CD4-positive, alpha-beta T cell (primary cell): ENCODE measurements at regions of chr12 and their contacts with region 1.

Region 1: GRCh38 chr12:46237371-46238045 is 31.3 kb downstream of the SLC38A1 start:
- DNase-seq: peak in 2 of 14 experiments; percentile 27 to 40
- ATAC-seq: no peak
- H3K4me3 ChIP-seq: no peak overlapping the region
- H3K4me3 Mint-ChIP-seq: peak overlapping the region; percentile 4
- H3K27ac ChIP-seq: peak overlapping the region in 1 of 2 donors; percentile 4
- H3K27ac Mint-ChIP-seq: peak overlapping the region; percentile 56
- H3K4me1 ChIP-seq: peaks cover 28% of the 10 kb centered on the region
- H3K4me1 Mint-ChIP-seq: peaks cover 87% of the 10 kb centered on the region
- H3K27me3 ChIP-seq: no peaks in the 10 kb centered on the region
- H3K27me3 Mint-ChIP-seq: no peaks in the 10 kb centered on the region
- CTCF ChIP-seq: no peak

Region 2: GRCh38 chr12:45944771-45945170 is 292.7 kb before region 1 on chr12:
- CTCF ChIA-PET with region 1: no interaction called
- POLR2A ChIA-PET with region 1: no interaction called
- intact Hi-C with region 1: no loop called
- DNase-seq: no peak
- ATAC-seq: no peak
- H3K4me3 ChIP-seq: no peak overlapping the region
- H3K4me3 Mint-ChIP-seq: no peak overlapping the region
- H3K27ac ChIP-seq: no peak overlapping the region
- H3K27ac Mint-ChIP-seq: peak overlapping the region; percentile 13
- H3K4me1 ChIP-seq: no peaks in the 10 kb centered on the region
- H3K4me1 Mint-ChIP-seq: peaks cover 35% of the 10 kb centered on the region
- H3K27me3 ChIP-seq: no peaks in the 10 kb centered on the region
- H3K27me3 Mint-ChIP-seq: no peaks in the 10 kb centered on the region
- CTCF ChIP-seq: no peak

Region 3: DNA sequence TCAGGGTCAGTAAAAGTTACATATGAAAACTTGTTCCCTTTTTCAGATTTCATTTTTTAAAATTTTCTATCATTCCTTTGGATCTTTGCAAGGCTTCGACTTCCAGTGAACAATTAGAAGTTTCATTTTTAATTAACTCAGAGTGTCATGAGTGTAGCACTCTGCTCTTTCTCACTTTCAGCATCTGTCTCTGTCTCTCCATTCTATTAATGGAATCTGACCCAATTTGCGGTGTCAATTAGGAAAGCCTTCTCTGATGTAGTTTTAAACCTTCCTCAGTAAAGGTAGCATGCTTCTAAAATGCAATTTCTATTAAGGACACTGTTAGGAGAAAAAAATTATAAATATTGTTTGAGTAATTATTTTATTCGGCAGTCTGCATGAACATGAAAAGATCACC is 37.0 kb before region 1 on chr12:
- CTCF ChIA-PET with region 1: interaction called, 3 read pairs
- POLR2A ChIA-PET with region 1: no interaction called
- intact Hi-C with region 1: loop called in 1 of 2 experiments (anchors 5 kb)
- DNase-seq: no peak
- ATAC-seq: no peak
- H3K4me3 ChIP-seq: no peak overlapping the region
- H3K4me3 Mint-ChIP-seq: no peak overlapping the region
- H3K27ac ChIP-seq: no peak overlapping the region
- H3K27ac Mint-ChIP-seq: no peak overlapping the region
- H3K4me1 ChIP-seq: no peaks in the 10 kb centered on the region
- H3K4me1 Mint-ChIP-seq: peaks cover 53% of the 10 kb centered on the region
- H3K27me3 ChIP-seq: no peaks in the 10 kb centered on the region
- H3K27me3 Mint-ChIP-seq: no peaks in the 10 kb centered on the region
- CTCF ChIP-seq: no peak